Adrenal gland (tissue), 19 donors: ENCODE measurements at regions of chr22 and their contacts with region 1.

Region 1: DNA sequence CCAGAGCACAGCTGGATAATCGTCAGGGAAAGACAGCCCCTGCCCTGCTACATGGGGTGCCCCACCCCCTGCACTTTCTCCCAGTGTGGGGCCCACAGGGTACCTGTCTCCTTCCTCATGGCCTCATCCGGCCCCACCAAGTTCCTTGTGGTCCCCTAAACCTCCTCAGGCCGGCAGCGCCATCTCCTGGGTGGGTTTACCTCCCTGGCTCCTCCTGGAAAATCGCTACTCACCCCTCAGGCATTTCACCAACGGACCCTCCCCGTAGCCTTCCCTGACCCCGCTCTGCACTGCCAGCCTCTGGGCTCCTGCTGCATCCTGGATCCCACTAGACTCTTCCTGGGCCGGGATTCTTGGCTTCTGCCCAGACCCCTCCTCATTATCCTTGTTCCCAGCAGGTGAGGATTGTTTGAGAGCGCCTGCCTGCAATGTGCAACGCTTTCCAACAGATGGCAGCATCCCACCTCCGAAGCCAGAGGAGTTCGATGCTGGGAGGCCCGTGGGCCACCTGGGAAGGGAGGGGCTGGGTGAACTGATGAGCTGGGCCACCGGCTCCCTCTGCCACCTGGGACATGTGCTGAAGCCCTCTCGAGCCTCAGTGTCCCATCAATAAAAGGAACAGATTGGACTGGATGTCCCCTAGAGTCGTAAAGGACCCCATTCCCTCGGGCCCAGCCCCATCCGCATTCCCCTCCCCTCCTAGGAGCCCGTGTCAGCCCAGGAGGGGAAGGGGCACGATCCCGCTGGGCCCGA is 44.2 kb upstream of the TTLL12 start:
- DNase-seq: peak; percentile 52 to 82 (median 67)
- H3K4me3 ChIP-seq: no peak overlapping the region
- H3K27ac ChIP-seq: no peak overlapping the region
- H3K4me1 ChIP-seq: peaks cover 9 to 11% of the 10 kb centered on the region in 2 donors
- H3K27me3 ChIP-seq: no peaks in the 10 kb centered on the region
- CTCF ChIP-seq: peak; percentile 90 to 94 (median 91)
- POLR2A ChIP-seq: no peak

Region 2: GRCh38 chr22:43168416-43169309 is 62.5 kb before region 1 on chr22:
- intact Hi-C with region 1: no loop called
- DNase-seq: no peak
- H3K4me3 ChIP-seq: no peak overlapping the region
- H3K27ac ChIP-seq: no peak overlapping the region
- H3K4me1 ChIP-seq: peaks cover 0 to 10% of the 10 kb centered on the region in 2 donors
- H3K27me3 ChIP-seq: no peaks in the 10 kb centered on the region
- CTCF ChIP-seq: no peak
- POLR2A ChIP-seq: no peak

Region 3: DNA sequence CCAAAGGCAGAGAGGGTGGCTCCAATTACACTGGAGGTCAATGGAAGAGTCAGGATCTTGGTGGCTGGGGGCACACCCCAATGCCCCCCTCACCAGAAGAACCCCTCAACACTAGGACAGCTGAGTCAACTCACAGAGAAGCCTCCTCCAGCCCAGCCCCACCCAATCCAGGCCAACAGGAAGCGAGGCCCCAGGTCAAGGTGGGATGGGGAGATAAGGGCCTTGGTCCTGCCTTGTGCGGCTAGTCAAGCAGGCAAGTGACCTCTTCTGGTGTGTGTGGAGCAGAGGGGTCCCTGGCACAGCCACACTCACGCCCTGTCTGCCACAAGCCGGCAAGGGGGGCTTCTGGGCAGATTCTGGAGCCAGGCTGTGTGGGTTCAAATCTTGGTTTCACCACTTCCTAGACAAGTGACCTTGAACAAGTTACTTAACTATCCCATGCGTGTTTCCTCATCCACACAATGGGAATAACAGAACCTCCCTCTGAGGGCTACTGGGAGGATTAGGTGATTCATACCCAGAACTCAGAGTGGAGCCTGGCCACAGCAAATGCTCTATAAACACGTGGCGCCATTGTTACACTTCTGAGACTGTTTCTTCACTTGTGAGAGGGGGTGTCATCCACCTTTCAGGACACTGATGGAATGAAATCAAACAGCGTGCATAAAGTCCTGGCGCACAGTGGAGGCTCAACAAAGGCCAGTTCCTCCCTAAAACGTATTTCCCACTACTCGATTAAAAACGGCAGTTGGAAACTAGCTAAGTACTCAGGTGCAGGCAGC is 47.5 kb before region 1 on chr22:
- intact Hi-C with region 1: no loop called
- DNase-seq: peak in 2 of 7 donors; percentile 30 to 43
- H3K4me3 ChIP-seq: no peak overlapping the region
- H3K27ac ChIP-seq: peak overlapping the region in 3 of 5 donors; percentile 13 to 80 (median 76)
- H3K4me1 ChIP-seq: peaks cover 21 to 27% of the 10 kb centered on the region in 2 donors
- H3K27me3 ChIP-seq: no peaks in the 10 kb centered on the region
- CTCF ChIP-seq: no peak
- POLR2A ChIP-seq: no peak

Region 4: DNA sequence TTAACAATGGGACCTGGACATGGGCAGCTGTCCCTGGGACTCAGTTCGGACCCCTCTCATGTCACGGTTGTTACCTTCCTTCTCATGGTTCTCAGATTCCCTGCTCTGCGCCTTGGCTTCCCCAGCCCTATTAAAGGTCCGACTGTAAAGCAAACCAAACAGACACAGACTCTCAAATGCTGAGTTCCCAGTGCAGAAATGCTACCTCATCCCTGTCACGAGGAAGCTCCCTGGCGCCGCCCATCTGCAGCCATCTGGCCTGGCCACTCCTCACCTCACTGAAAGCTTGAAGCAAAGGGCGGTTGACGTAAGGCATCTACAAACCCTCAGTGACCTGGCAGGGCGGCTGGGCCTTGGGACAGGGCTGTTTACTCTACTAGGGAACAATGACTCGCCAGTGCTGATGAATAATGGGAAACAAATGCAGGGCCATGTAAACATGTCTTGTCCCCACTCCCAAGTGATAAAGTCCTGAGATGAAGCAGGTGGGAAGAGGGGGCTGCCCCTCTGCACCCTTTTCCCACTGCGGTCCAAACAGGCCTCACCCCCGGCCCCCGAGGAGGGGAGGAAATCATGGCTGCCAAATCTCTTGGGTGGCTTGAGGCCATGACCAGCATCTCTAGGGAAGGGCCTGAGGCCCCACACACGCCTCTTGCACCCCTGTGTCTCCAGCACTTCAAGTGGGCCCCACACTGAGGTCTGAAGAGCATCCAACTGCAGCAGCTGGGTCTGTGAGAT is 62.7 kb after region 1 on chr22:
- intact Hi-C with region 1: no loop called
- DNase-seq: peak; percentile 58 to 96 (median 83)
- H3K4me3 ChIP-seq: no peak overlapping the region
- H3K27ac ChIP-seq: peak overlapping the region in 4 of 5 donors; percentile 43 to 87 (median 74)
- H3K4me1 ChIP-seq: peaks cover 0 to 38% of the 10 kb centered on the region in 2 donors
- H3K27me3 ChIP-seq: no peaks in the 10 kb centered on the region
- CTCF ChIP-seq: no peak
- POLR2A ChIP-seq: peak in 1 of 2 donors; percentile 30

Region 5: DNA sequence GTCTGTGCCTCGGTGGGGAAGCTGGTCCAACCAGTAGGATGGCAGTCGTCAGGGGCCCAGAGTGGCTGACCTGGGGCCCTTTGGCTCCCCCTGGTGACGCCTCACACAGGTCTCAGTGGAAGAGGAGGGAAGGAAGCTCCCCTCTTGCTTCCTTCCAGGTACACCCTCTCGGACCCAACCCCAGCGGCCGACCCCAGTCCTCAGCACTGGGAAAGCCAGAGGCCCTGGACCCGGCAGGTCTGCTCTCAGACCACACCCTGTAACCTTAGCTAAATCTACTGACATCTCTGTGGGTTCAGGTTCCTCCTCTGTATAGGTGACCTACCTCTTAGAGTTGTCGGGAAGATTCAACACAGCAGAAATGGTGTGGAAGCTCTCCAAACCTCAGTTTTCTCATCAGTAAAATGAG is 115.4 kb after region 1 on chr22:
- intact Hi-C with region 1: loop called in 1 of 2 experiments (anchors 2 kb)
- DNase-seq: peak; percentile 50 to 77 (median 62)
- H3K4me3 ChIP-seq: no peak overlapping the region
- H3K27ac ChIP-seq: no peak overlapping the region
- H3K4me1 ChIP-seq: peaks cover 0 to 9% of the 10 kb centered on the region in 2 donors
- H3K27me3 ChIP-seq: peaks cover 4% of the 10 kb centered on the region
- CTCF ChIP-seq: peak; percentile 46 to 76 (median 64)
- POLR2A ChIP-seq: no peak